HEK293 (cell line): ENCODE measurements at regions of chr1 and their contacts with region 1.

Region 1: DNA sequence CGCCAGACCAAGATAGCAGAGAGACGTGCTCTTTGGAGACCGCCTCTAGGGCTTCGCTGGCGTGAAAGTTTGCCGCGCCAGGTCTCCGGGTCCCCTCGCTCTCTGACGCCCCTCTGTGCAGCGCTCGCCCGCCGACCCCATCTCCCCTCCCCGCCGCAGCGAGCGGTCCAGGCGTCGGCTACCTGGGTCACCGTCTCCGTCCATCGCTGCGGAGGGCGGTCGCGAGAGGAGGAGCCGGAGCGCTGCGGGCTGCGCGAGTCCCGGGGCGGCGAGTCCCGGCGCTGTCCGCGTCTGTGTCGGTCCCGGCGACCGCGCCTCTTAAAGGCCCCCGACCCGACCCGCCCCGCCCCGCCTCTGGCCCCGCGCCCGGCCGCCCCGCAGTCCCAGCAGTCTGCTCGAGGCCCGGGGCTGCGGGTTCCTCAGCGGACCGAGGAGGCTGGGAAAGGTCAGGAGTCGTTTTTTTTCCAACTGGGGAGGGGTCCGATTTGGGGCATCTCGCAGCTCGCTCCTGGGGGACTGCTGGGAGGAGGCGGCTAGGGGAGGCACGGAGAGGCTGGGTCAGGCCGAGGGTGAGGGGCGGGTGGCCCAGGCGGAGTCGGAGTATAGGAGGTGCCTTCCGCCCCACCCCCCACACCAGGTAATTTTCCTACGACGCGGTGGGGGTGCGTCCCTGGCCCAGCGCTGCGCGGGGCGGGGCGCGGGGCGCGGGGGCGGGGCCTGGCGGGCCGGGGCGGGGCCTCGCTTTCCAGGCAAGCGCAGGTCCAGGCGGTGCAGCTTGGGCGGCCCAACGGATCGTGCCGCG is at the starts of genes FBXO2 and FBXO44:
- H3K4me3 ChIP-seq: peak within 1 kb of the TSS; percentile 65
- H3K27ac ChIP-seq: no peak within 1 kb of the TSS
- H3K4me1 ChIP-seq: no peaks in the 10 kb centered on the region
- CTCF ChIP-seq: no peak

Region 2: GRCh38 chr1:11707621-11708276 is 53.4 kb after region 1 on chr1:
- CTCF ChIA-PET with region 1: interaction called, 19 read pairs
- POLR2A ChIA-PET with region 1: interaction called, 13 read pairs
- H3K4me3 ChIP-seq: no peak overlapping the region
- H3K27ac ChIP-seq: no peak overlapping the region; the same call in 1 of the 2 replicates
- H3K4me1 ChIP-seq: peaks cover 4% of the 10 kb centered on the region; the same call in 1 of the 2 replicates
- CTCF ChIP-seq: peak; percentile 74

Region 3: GRCh38 chr1:11719313-11720032 is 65.1 kb after region 1 on chr1:
- CTCF ChIA-PET with region 1: interaction called, 29 read pairs
- POLR2A ChIA-PET with region 1: no interaction called
- H3K4me3 ChIP-seq: peak overlapping the region; percentile 11
- H3K27ac ChIP-seq: no peak overlapping the region
- H3K4me1 ChIP-seq: no peaks in the 10 kb centered on the region
- CTCF ChIP-seq: peak; percentile 93

Region 4: DNA sequence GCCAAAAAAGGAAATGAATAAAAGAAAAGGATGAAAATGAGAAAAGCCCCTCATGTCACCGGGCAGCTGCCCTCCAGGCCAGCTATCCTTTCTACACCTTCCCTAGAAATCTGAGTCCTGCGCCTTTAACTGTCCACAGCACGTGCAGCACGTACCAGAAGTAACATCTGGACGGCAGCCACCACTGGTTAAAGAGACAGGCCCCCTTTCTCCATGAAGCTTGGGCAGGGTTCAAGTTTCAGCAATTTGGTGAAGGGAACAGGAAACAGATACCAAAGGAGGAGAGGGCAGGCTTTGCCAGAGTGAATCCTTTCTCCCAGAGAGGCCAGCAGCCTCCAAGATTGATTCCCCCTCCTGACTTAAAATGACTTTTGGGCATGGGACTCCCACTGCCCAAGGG is 275.5 kb after region 1 on chr1:
- CTCF ChIA-PET with region 1: no interaction called
- POLR2A ChIA-PET with region 1: no interaction called
- H3K4me3 ChIP-seq: no peak overlapping the region
- H3K27ac ChIP-seq: no peak overlapping the region
- H3K4me1 ChIP-seq: peaks cover 6% of the 10 kb centered on the region
- CTCF ChIP-seq: no peak